BJ (cell line): ENCODE measurements at regions of chr11 and their contacts with region 1.

Region 1: DNA sequence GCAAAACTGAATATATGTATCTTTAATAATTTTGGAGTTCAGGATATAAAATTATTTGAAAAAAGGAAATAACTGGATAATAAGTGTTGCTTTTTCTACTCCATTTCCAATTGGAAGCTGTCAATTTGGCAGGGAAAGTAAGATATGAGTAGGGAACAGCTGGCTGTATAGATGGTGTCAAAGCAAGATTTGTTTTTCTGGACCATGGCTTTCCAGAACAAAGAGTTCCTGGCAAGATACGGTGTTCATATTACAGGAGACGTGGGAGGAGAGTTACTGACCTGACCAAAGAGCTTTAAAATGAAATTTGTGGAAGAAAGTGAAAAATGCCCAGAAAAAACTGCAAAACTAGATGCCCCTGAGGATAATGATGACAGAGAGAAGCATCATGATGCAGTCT is 442.7 kb upstream of the KIRREL3 start:
- DNase-seq: no peak
- H3K4me3 ChIP-seq: no peak overlapping the region
- H3K27me3 ChIP-seq: no peaks in the 10 kb centered on the region
- CTCF ChIP-seq: no peak

Region 2: GRCh38 chr11:127105593-127106541 is 337.4 kb before region 1 on chr11:
- CTCF ChIA-PET with region 1: no interaction called
- POLR2A ChIA-PET with region 1: interaction called, 11 read pairs
- DNase-seq: no peak
- H3K4me3 ChIP-seq: no peak overlapping the region
- H3K27me3 ChIP-seq: peaks cover 18% of the 10 kb centered on the region
- CTCF ChIP-seq: no peak

Region 3: GRCh38 chr11:127454856-127455255 is 11.6 kb after region 1 on chr11:
- CTCF ChIA-PET with region 1: no interaction called
- POLR2A ChIA-PET with region 1: no interaction called
- DNase-seq: no peak
- H3K4me3 ChIP-seq: no peak overlapping the region
- H3K27me3 ChIP-seq: peaks cover 3% of the 10 kb centered on the region; the same call in 1 of the 2 replicates
- CTCF ChIP-seq: no peak

Region 4: GRCh38 chr11:127574478-127574877 is 131.2 kb after region 1 on chr11:
- CTCF ChIA-PET with region 1: no interaction called
- POLR2A ChIA-PET with region 1: no interaction called
- DNase-seq: no peak
- H3K4me3 ChIP-seq: no peak overlapping the region
- H3K27me3 ChIP-seq: no peaks in the 10 kb centered on the region
- CTCF ChIP-seq: no peak